ENCODE measurements at regions of chr13 and their contacts with region 1.

Region 1: GRCh38 chr13:24087605-24088225 is 72.8 kb upstream of the SPATA13 start:
- DNase-seq: no peak
- ATAC-seq: no peak

Region 2: DNA sequence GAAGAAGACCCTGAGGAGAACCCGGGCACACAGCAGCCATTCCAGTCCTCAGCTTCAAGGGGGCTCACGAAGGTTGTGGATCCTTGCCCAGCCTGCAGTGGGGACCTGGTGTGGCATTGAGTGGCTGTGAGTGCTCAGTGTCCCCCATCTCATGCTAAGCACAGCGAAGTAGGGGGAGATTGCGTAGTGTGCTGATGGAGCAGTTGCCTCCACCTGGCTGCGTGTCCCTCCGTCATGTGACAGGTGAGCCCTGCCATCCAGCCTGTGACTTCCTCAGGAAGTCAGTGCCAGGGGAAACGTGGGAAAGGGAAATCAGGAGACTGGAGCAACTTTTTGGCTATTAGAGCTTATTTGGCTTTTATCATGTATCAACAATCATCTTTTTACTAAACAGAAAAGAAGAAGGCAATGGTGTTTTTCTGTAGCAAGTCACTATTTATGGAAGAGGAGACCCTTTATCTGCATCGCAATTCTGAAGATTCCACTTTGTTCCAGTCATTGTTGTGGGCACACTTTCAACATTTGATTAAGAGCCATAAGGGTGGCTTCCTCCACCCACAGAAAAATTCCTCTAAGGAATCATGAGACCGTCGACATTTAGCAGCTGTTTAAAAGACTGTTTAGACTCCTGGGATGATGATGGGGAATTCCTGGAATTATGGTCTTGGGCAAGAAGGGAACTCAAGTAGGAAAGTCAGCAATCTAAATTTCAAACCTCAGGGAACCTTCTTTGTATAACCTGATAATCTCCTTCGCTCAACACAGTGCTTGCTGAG is 54.0 kb before region 1 on chr13:
- intact Hi-C with region 1: loop called (anchors 2 kb)
- DNase-seq: no peak
- ATAC-seq: peak; percentile 61

Region 3: DNA sequence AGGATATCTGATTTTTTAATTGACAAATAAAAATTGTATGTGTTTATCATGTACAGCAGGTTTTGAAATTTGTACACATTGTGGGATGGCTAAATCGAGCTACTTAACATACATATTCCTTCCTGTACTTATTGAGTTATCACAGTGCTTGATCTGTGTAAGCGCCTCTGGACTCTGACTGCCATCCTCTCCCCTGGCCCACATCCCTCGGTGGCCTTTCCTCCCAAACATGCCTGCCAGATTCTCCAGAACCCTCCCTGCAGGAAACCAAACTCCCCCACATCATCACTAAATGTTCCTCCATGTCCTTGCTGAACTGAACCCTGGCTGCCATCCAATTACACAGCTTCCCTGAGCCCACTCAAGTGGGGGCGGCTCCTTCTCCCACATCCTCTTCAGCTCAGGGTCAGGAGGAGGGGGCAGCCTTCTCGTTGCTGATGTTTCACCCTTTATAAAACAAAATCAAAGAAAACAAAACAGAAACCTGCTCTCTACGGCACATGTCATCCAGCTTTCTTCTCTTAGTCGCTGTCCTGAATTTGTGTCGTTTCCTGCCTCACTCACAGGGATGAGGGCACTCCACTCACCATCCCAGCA is 24.3 kb before region 1 on chr13:
- intact Hi-C with region 1: no loop called
- DNase-seq: no peak
- ATAC-seq: no peak

Region 4: GRCh38 chr13:25980255-25980654 is 1892.5 kb after region 1 on chr13:
- intact Hi-C with region 1: no loop called
- DNase-seq: no peak
- ATAC-seq: no peak

Measured in sciatic nerve (tissue), 2 donors.